Activated B cell treated with CpG ODN at 0.5 μM for 24 hours (primary cell): ENCODE measurements at regions of chr3 and their contacts with region 1.

Region 1: GRCh38 chr3:196969660-196970546 is 1.3 kb upstream of the PIGZ start:
- DNase-seq: peak; percentile 81
- ATAC-seq: peak; percentile 73
- H3K4me3 Mint-ChIP-seq: peak overlapping the region; percentile 83
- H3K27ac Mint-ChIP-seq: peak overlapping the region; percentile 70
- H3K4me1 Mint-ChIP-seq: peaks cover 27% of the 10 kb centered on the region
- H3K27me3 Mint-ChIP-seq: no peaks in the 10 kb centered on the region
- CTCF ChIP-seq: peak; percentile 38

Region 2: GRCh38 chr3:196251918-196252317 is 718.0 kb before region 1 on chr3:
- CTCF ChIA-PET with region 1: no interaction called
- POLR2A ChIA-PET with region 1: no interaction called
- intact Hi-C with region 1: loop called (anchors 5 kb)
- DNase-seq: no peak
- ATAC-seq: peak; percentile 70
- H3K4me3 Mint-ChIP-seq: no peak overlapping the region
- H3K27ac Mint-ChIP-seq: no peak overlapping the region
- H3K4me1 Mint-ChIP-seq: peaks cover 8% of the 10 kb centered on the region
- H3K27me3 Mint-ChIP-seq: no peaks in the 10 kb centered on the region
- CTCF ChIP-seq: no peak

Region 3: GRCh38 chr3:196537319-196537984 is 432.5 kb before region 1 on chr3:
- CTCF ChIA-PET with region 1: no interaction called
- POLR2A ChIA-PET with region 1: no interaction called
- intact Hi-C with region 1: loop called (anchors 1 kb)
- DNase-seq: peak; percentile 25
- ATAC-seq: peak; percentile 34
- H3K4me3 Mint-ChIP-seq: no peak overlapping the region
- H3K27ac Mint-ChIP-seq: no peak overlapping the region
- H3K4me1 Mint-ChIP-seq: peaks cover 2% of the 10 kb centered on the region
- H3K27me3 Mint-ChIP-seq: no peaks in the 10 kb centered on the region
- CTCF ChIP-seq: peak; percentile 23

Region 4: GRCh38 chr3:196711838-196712513 is 257.9 kb before region 1 on chr3 and contains the starts of genes CEP19 and PIGX:
- CTCF ChIA-PET with region 1: no interaction called
- POLR2A ChIA-PET with region 1: no interaction called
- intact Hi-C with region 1: loop called (anchors 10 kb)
- DNase-seq: peak; percentile 96
- ATAC-seq: peak; percentile 80
- H3K4me3 Mint-ChIP-seq: peak within 1 kb of the TSS; percentile 91
- H3K27ac Mint-ChIP-seq: peak within 1 kb of the TSS; percentile 98
- H3K4me1 Mint-ChIP-seq: peaks cover 20% of the 10 kb centered on the region
- H3K27me3 Mint-ChIP-seq: no peaks in the 10 kb centered on the region
- CTCF ChIP-seq: no peak
- total RNA-seq, gene CEP19: 4.0 and 4.1 TPM in 2 replicates
- total RNA-seq, gene PIGX: 18.0 and 21.8 TPM in 2 replicates

Region 5: DNA sequence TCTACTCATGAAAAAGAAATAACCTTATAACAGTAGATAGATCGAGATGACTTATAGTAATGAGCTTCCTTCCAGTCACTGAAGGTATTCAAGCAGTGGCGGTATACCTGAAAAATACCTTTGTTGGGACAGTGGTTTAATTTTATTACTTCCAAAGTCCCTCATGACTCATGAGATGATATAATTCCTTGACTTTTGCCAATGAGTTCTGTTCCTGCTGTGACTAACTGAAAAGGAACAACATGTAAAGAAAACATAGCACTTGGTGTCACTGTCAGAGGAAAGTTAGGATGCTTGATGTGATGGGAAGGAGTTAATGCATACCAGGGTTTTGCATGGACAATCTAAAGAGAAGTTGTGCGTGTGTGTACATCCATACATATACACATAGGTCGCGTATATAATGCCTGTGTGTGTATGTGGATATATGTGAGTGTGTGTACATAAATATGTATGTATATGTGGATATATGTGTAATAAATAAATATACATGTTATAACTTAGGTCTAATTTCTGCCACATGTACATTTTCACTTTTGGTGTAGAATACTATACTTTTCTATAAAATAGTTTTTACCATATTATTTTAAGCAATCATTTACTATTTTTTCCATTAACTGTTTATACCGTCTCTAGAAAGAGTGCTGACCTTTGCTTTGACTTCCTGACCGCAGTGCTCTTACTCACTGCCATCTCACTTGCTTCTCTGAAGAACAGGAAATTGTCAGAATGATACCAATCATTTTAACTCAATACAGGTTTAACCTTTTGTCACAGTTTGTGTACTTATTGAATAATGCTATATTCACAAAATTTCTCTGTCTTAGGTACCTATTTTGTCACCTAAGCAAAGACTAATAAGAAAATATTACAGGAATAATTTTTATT is 242.9 kb before region 1 on chr3:
- CTCF ChIA-PET with region 1: no interaction called
- POLR2A ChIA-PET with region 1: no interaction called
- intact Hi-C with region 1: no loop called
- DNase-seq: no peak
- ATAC-seq: no peak
- H3K4me3 Mint-ChIP-seq: no peak overlapping the region
- H3K27ac Mint-ChIP-seq: no peak overlapping the region
- H3K4me1 Mint-ChIP-seq: no peaks in the 10 kb centered on the region
- H3K27me3 Mint-ChIP-seq: no peaks in the 10 kb centered on the region
- CTCF ChIP-seq: no peak

Region 6: DNA sequence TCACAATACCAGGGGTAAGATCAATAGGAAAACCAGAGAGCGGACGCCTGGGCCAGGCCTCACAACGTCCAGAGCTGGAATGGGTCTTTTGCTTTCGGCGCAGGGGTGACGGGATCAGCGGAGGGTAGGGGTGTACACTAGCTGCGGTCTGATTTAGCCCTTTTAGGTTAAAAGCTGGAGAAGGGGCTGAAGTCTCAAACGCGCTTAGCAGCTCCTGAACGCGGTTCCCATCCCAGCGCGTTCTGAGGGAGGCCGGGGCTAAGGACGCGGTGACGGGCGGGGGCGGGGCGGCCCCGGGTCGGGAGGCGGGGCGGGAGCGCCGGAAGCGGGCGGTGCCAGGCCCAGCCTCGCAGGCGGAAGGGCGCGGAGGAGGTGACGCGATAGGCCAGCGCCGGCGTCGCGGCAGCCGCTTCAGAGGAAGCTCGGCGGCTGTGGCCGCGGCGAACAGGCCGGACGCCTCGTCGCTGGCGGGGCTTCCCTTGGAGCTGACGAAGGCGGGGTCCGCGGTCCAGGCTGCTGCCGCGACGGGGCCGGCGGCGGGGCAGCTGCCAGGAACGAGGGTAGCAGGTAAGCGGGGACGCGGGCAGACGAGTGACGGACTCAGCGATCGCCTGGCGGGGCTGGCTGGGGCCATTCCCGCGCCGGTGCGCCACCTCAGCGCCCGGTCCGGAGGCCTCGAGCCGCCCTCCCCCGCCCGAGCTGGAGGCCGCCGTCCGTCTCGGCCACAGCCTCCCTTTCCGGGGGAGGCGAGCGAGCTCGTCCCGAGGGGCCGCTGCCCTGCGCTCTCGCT is 102.2 kb before region 1 on chr3 and contains the start of gene SENP5:
- CTCF ChIA-PET with region 1: interaction called, 3 read pairs
- POLR2A ChIA-PET with region 1: interaction called, 3 read pairs
- intact Hi-C with region 1: loop called (anchors 1 kb)
- DNase-seq: peak; percentile 87
- ATAC-seq: peak; percentile 97
- H3K4me3 Mint-ChIP-seq: peak within 1 kb of the TSS; percentile 93
- H3K27ac Mint-ChIP-seq: peak within 1 kb of the TSS; percentile 89
- H3K4me1 Mint-ChIP-seq: peaks cover 28% of the 10 kb centered on the region
- H3K27me3 Mint-ChIP-seq: no peaks in the 10 kb centered on the region
- CTCF ChIP-seq: no peak
- total RNA-seq, gene SENP5: 35.8 and 45.2 TPM in 2 replicates

Region 7: DNA sequence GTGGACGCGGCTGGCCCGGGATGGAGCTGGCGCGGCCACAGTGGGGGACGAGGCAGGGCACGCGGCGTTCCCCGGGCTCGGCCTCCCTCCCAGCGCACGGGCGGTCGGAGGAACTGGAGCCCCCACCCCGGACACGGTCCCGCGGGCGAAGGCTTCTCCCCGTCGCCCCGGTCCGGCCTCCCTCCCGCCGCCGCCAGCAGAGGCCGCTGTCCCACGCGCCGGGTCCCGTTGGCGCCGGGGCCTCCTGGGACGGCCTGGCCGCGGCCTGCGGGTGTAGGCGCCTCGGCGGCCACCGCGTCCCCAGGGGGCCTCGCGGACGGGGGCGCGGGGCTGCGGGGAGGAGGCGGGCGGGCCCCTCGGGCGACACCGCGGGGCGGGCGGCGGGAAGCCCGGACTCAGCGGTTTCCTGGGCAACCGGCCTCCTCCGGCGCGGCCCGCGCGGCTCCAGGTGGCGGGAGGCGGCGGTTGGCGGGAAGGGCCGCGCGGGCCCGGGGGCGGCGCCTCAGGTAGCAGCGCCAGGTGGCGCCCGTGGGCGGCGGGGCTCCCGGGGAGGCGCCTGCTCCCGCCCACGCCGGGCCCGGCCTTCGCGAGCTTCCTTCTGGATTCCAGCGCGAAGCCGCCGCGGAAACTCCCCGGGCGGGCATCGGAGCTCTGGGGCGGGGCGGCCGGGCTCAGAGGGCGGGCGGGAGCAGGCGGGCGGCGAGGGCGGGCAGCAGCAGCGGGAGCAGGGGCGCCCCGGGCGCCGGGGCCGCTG is 33.0 kb after region 1 on chr3:
- CTCF ChIA-PET with region 1: no interaction called
- POLR2A ChIA-PET with region 1: no interaction called
- intact Hi-C with region 1: no loop called
- DNase-seq: peak; percentile 94
- ATAC-seq: peak; percentile 79
- H3K4me3 Mint-ChIP-seq: no peak overlapping the region
- H3K27ac Mint-ChIP-seq: no peak overlapping the region
- H3K4me1 Mint-ChIP-seq: peaks cover 11% of the 10 kb centered on the region
- H3K27me3 Mint-ChIP-seq: peaks cover 7% of the 10 kb centered on the region
- CTCF ChIP-seq: no peak

Region 8: DNA sequence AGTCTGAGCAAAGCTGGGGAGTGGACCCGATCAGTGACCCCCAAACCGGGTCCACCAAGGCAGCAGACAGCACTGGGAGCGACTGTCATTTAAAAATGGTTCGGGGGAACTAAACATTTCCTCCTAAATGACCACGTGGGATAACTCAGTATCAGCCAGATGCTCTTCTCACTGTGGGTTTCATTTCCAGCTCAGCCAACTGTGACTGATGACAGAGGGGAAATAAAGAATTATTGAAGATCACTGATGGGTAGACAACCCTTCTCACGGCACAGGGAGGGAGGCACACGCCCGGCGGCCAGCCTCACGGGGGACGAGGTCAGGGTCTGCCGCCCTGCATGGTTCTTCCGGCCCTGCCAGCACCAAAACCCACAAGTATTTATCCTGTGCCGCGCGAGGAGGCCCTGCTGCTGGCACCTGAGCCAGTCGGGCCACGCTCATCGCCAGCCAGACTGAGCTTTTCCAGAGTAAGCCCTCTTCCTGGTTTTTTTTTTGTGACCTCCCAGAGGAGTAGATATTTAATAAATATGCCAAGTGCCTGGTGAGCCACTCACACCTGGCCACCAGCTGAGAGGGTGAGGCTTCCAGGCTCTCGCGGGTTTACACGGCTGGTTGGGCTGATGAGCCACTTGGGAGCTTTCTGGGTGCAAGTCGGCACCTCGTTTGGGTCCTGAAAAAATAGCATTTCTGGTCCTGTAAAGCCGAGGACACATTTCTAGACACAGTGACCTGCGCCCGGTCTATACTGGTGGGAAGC is 53.5 kb after region 1 on chr3:
- CTCF ChIA-PET with region 1: no interaction called
- POLR2A ChIA-PET with region 1: no interaction called
- intact Hi-C with region 1: loop called (anchors 2 kb)
- DNase-seq: peak; percentile 70
- ATAC-seq: peak; percentile 79
- H3K4me3 Mint-ChIP-seq: peak overlapping the region; percentile 75
- H3K27ac Mint-ChIP-seq: peak overlapping the region; percentile 96
- H3K4me1 Mint-ChIP-seq: peaks cover 41% of the 10 kb centered on the region
- H3K27me3 Mint-ChIP-seq: peaks cover 9% of the 10 kb centered on the region
- CTCF ChIP-seq: no peak